Panc1 (cell line): ENCODE measurements at regions of chr1 and their contacts with region 1.

Region 1: GRCh38 chr1:114397601-114398000 is 113.4 kb downstream of the TRIM33 start:
- DNase-seq: no peak
- ATAC-seq: no peak
- H3K4me3 ChIP-seq: no peak overlapping the region
- H3K27ac ChIP-seq: no peak overlapping the region
- H3K4me1 ChIP-seq: no peaks in the 10 kb centered on the region
- H3K27me3 ChIP-seq: no peaks in the 10 kb centered on the region
- CTCF ChIP-seq: no peak

Region 2: GRCh38 chr1:114114185-114115094 is 283.2 kb before region 1 on chr1:
- CTCF ChIA-PET with region 1: no interaction called
- POLR2A ChIA-PET with region 1: no interaction called
- in situ Hi-C with region 1: no loop called
- intact Hi-C with region 1: no loop called
- DNase-seq: no peak
- ATAC-seq: no peak
- H3K4me3 ChIP-seq: no peak overlapping the region
- H3K27ac ChIP-seq: no peak overlapping the region
- H3K4me1 ChIP-seq: no peaks in the 10 kb centered on the region
- H3K27me3 ChIP-seq: no peaks in the 10 kb centered on the region; the same call in 1 of the 2 replicates
- CTCF ChIP-seq: no peak

Region 3: DNA sequence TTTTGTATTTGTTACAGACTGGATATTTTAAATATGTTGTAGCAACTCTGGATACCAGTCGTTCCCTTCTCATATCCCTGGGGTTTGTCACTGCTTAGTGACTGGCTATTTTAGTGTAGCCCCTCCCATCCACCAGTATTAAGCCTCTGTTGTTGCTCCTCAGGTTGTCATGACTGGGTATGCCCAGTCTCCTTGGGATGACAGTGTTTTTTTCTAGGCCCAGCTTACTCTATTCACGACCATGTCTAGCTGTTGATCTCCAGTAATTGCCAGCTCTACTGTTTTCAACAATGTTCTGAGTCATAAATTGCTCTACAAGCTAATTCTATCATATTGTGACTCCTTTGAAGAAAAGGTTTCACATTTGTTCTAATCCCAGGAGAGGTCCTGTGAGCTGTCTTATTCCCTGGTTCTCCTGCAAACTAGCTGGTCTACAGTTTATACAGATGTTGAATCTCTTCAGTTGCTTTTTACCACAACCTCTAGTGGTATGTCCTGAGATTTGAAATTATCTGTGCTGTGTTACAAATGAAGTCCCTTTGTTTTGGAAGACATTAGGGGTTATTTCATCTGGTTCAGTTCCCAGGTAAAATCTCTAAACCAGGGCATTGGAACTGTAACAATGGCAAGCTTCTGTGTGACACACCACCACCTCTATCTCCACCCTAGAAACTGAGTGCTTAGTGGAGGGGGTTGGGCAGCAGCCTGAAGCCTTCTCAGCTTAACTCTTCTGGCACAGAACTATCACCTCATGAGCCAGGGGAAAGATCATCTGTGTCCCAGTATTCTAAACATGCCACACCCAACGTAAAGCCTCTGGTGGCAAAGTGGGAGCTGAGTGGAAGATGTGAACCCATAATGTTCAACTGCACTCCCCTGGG is 11.2 kb before region 1 on chr1:
- CTCF ChIA-PET with region 1: interaction called, 15 read pairs
- POLR2A ChIA-PET with region 1: no interaction called
- in situ Hi-C with region 1: no loop called
- intact Hi-C with region 1: no loop called
- DNase-seq: no peak
- ATAC-seq: no peak
- H3K4me3 ChIP-seq: no peak overlapping the region
- H3K27ac ChIP-seq: no peak overlapping the region
- H3K4me1 ChIP-seq: no peaks in the 10 kb centered on the region
- H3K27me3 ChIP-seq: no peaks in the 10 kb centered on the region
- CTCF ChIP-seq: no peak

Region 4: DNA sequence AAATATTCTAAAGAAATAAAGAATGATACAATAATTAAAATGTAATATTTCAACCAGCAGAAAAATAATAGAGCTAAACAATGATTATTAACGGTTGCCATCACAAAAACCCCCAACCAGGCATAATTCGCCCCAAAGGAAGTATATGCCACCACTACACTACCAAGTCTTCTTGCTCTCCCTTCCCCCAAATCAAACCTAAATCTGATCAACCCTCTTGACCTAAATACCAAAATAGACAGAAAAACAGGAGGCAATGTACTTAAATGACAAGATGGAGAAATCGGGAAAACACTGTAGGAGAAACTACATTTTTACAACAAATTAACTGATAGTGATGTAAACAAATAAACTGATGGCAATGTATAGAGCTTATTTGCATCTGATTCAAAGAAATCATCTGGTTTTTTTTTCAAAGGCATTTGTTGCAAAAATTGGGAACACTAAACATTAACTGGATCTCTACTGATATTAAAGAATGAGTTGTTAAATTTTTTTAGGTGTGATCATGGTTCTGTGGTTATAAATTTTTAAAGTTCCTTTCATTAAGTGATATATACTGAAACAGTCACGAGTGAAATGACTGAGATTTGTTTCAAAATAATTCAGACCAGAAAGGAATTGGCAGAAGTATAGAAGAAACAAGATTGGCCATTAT is 10.4 kb after region 1 on chr1:
- CTCF ChIA-PET with region 1: no interaction called
- POLR2A ChIA-PET with region 1: no interaction called
- in situ Hi-C with region 1: no loop called
- intact Hi-C with region 1: no loop called
- DNase-seq: no peak
- ATAC-seq: no peak
- H3K4me3 ChIP-seq: no peak overlapping the region
- H3K27ac ChIP-seq: no peak overlapping the region
- H3K4me1 ChIP-seq: no peaks in the 10 kb centered on the region
- H3K27me3 ChIP-seq: no peaks in the 10 kb centered on the region
- CTCF ChIP-seq: no peak